Common myeloid progenitor, CD34-positive (primary cell): ENCODE measurements at regions of chr17 and their contacts with region 1.

Region 1: GRCh38 chr17:75845049-75845860 is 1.1 kb upstream of the UNC13D start:
- DNase-seq: peak; percentile 83 to 91 (median 90)
- H3K4me3 ChIP-seq: peak overlapping the region in 6 of 7 experiments; percentile 36 to 84 (median 78)
- H3K27ac ChIP-seq: peak overlapping the region; percentile 90 to 95
- H3K4me1 ChIP-seq: peaks cover 0 to 61% (median 53%) of the 10 kb centered on the region in 4 experiments
- H3K27me3 ChIP-seq: no peaks in the 10 kb centered on the region

Region 2: GRCh38 chr17:75405365-75406221 is 439.7 kb before region 1 on chr17 and contains the start of gene GRB2:
- CTCF ChIA-PET with region 1: no interaction called
- POLR2A ChIA-PET with region 1: no interaction called
- DNase-seq: peak; percentile 97 to 98 (median 98)
- H3K4me3 ChIP-seq: peak within 1 kb of the TSS; percentile 93 to 100 (median 98)
- H3K27ac ChIP-seq: peak within 1 kb of the TSS; percentile 85 to 90
- H3K4me1 ChIP-seq: peaks cover 18 to 52% (median 37%) of the 10 kb centered on the region in 4 experiments
- H3K27me3 ChIP-seq: no peaks in the 10 kb centered on the region

Region 3: DNA sequence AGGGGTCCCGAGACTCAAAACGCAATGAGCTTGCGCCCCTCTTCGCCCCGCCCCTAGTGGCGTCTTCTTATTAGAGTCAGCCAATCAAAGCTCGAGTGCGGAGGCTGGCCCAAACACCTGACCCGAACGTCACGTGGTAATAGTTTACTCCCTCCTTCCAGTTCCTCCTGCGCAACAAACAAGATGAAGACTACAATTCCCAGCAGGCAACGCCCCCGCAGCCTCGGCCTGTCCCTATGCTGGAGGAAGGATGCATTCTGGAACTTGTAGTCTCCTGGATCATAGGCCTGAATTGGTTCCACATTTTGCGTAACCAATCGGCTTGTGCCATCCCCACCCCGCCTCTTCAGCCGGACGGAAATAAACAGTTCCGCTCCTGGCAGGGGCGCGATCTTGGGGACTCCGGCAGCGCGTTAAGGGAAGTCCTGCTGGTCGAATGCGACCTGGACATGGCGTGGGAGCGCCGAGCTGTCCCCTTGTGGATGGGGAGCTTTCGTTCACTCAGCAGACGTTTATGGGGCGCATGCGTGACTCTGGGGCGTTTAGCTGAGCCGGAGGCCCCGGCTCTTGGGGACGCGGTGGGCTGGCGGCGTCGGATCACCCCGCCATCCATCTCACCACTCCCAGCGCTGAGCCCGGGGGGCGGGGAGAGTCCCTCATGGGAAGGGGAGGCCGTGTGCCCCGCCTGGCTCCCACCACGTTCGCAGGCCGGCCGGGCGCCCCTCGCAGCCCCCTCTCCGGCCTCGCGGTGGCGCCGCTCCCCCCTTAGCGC is 10.2 kb after region 1 on chr17 and contains the start of gene WBP2:
- CTCF ChIA-PET with region 1: interaction called, 134 read pairs
- POLR2A ChIA-PET with region 1: interaction called, 35 read pairs
- DNase-seq: peak; percentile 100
- H3K4me3 ChIP-seq: peak within 1 kb of the TSS; percentile 53 to 97 (median 83)
- H3K27ac ChIP-seq: peak within 1 kb of the TSS; percentile 58 to 90
- H3K4me1 ChIP-seq: peaks cover 22 to 60% (median 45%) of the 10 kb centered on the region in 4 experiments
- H3K27me3 ChIP-seq: no peaks in the 10 kb centered on the region

Region 4: GRCh38 chr17:75896415-75897159 is 51.3 kb after region 1 on chr17 and contains the start of gene TRIM65:
- CTCF ChIA-PET with region 1: interaction called, 26 read pairs
- POLR2A ChIA-PET with region 1: interaction called, 6 read pairs
- DNase-seq: peak; percentile 83 to 88 (median 83)
- H3K4me3 ChIP-seq: peak within 1 kb of the TSS; percentile 66 to 85 (median 76)
- H3K27ac ChIP-seq: peak within 1 kb of the TSS in 1 of 2 experiments; percentile 70
- H3K4me1 ChIP-seq: peaks cover 2 to 25% (median 20%) of the 10 kb centered on the region in 4 experiments
- H3K27me3 ChIP-seq: no peaks in the 10 kb centered on the region